Activated CD4-positive, alpha-beta T cell treated with anti-CD3 and anti-CD28 coated beads, Interleukin-2, amount 10 ng/mL, durations not matched to agents 24 days and 14 days (primary cell): ENCODE measurements at regions of chr12 and their contacts with region 1.

Region 1: GRCh38 chr12:94262228-94263010 is 114.0 kb downstream of the PLXNC1 start:
- DNase-seq: peak; percentile 90
- H3K4me3 Mint-ChIP-seq: peak overlapping the region; percentile 84
- H3K27ac Mint-ChIP-seq: peak overlapping the region; percentile 98
- H3K4me1 Mint-ChIP-seq: peaks cover 35% of the 10 kb centered on the region
- H3K27me3 Mint-ChIP-seq: no peaks in the 10 kb centered on the region

Region 2: GRCh38 chr12:93243689-93244513 is 1018.5 kb before region 1 on chr12:
- intact Hi-C with region 1: no loop called
- DNase-seq: peak; percentile 74
- H3K4me3 Mint-ChIP-seq: peak overlapping the region; percentile 78
- H3K27ac Mint-ChIP-seq: peak overlapping the region; percentile 77
- H3K4me1 Mint-ChIP-seq: peaks cover 34% of the 10 kb centered on the region
- H3K27me3 Mint-ChIP-seq: no peaks in the 10 kb centered on the region

Region 3: GRCh38 chr12:94172973-94173372 is 89.4 kb before region 1 on chr12:
- intact Hi-C with region 1: loop called (anchors 2 kb)
- DNase-seq: no peak
- H3K4me3 Mint-ChIP-seq: no peak overlapping the region
- H3K27ac Mint-ChIP-seq: no peak overlapping the region
- H3K4me1 Mint-ChIP-seq: peaks cover 54% of the 10 kb centered on the region
- H3K27me3 Mint-ChIP-seq: no peaks in the 10 kb centered on the region

Region 4: GRCh38 chr12:94244165-94245133 is 18.0 kb before region 1 on chr12:
- intact Hi-C with region 1: loop called (anchors 2 kb)
- DNase-seq: peak; percentile 80
- H3K4me3 Mint-ChIP-seq: peak overlapping the region; percentile 53
- H3K27ac Mint-ChIP-seq: peak overlapping the region; percentile 77
- H3K4me1 Mint-ChIP-seq: peaks cover 33% of the 10 kb centered on the region
- H3K27me3 Mint-ChIP-seq: no peaks in the 10 kb centered on the region

Region 5: DNA sequence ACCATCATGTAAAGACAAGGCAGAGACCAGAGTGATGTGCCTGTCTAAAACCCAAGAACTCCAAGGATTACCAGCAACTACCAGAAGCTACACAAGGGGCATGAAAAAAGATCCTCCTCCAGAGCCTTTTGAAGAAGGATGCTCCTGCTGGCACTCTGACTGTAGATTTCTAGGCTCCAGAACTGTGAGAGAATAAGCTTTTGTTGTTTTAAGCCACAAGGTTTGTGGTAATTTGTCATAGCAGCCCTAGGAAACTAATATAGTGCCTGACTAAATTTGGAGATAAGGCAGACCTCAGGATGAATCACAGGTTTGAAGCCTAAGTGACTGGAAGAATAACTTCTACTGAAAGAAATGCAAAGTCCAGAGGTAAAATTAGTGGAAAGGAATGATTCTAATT is 64.3 kb after region 1 on chr12:
- intact Hi-C with region 1: loop called (anchors 2 kb)
- DNase-seq: no peak
- H3K4me3 Mint-ChIP-seq: no peak overlapping the region
- H3K27ac Mint-ChIP-seq: peak overlapping the region; percentile 65
- H3K4me1 Mint-ChIP-seq: peaks cover 24% of the 10 kb centered on the region
- H3K27me3 Mint-ChIP-seq: no peaks in the 10 kb centered on the region

Region 6: DNA sequence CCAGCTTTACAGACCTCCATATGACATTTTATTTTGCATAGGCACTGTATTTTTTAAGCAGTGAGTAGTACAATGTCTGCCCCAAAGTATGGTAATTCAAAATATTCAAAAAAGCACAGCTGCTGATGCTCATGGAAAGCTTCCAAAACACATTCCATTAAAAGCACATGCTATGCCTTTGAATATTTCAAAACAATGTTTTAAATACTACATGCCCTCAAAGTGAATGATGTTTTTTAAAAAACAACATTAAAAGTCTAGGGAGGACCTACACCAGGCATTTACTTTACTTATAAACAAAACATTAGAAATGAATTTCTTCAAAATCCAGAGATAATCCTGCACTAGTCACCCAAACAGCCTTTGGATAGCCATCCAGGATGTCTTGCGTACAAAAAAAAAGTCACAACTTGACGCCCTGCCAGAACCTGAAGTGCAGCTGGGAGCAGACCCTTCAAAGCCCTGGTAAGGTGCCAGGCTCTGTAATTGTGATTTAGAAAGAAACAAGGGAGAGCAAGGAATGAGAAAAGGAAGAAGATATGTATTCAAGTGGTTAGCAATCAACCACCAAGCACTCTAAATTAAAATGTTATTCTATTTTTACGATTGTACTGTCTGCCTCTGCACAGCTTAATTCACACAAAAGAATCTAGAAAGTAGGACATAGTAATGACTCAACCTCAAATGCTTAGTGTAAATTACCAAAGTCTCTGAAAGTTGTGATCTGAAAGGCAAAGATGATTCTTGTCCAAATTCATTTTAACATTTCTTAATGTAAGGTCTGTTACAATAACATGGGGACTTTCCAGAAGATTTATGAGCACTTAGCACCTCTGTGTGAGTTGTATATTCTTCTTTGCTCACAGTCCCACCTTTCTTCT is 165.3 kb after region 1 on chr12:
- intact Hi-C with region 1: loop called (anchors 5 kb)
- DNase-seq: no peak
- H3K4me3 Mint-ChIP-seq: no peak overlapping the region
- H3K27ac Mint-ChIP-seq: peak overlapping the region; percentile 68
- H3K4me1 Mint-ChIP-seq: peaks cover 7% of the 10 kb centered on the region
- H3K27me3 Mint-ChIP-seq: no peaks in the 10 kb centered on the region

Region 7: DNA sequence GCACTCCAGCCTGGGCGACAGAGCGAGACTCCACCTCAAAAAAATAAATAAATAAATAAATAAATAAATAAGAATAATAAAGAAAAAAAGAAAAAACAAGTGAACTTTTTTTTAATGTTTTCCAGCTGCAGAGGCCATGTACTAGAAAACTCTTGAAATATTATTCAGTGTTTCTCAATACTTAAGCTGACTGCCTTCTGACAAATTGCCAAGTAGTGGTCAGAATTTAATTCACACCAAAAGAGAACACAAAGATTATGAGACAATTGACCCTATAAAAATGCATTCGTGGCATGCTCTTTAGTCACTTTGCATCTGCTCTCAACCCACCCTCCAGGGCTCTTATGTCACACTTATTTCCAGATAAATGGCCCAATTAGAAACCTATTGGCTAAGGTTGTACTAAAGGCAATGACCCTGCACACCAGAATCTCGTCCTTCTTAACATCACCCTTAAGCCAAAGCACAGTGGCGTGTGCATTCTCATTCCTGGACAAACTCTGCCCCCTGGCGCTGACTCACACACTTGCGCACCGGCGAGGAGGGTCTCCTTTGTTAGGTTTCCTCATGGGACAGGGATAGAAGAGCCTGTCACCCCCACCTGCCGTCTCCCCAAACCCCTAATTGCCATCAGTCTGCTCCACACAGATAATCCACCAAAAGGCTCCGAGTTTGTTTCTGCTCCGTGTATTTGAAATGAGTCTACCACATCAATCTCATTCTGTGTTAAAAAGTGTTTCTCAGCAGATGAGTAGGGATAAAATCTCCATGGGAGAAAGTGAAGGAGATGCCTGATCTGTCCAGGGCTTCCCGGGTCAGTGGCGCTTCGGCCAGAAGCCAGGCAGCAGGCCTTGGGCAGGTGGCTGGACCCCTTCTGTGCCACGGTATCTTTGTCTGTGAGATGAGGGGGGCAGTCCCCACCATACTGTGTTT is 270.3 kb after region 1 on chr12:
- intact Hi-C with region 1: loop called (anchors 2 kb)
- DNase-seq: peak; percentile 92
- H3K4me3 Mint-ChIP-seq: no peak overlapping the region
- H3K27ac Mint-ChIP-seq: no peak overlapping the region
- H3K4me1 Mint-ChIP-seq: peaks cover 14% of the 10 kb centered on the region
- H3K27me3 Mint-ChIP-seq: peaks cover 7% of the 10 kb centered on the region